CD8-positive, alpha-beta T cell (primary cell): ENCODE measurements at regions of chr9 and their contacts with region 1.

Region 1: GRCh38 chr9:122827761-122828093 is 661 bp downstream of the PDCL start:
- DNase-seq: no peak
- ATAC-seq: no peak
- H3K4me3 ChIP-seq: peak overlapping the region; percentile 93 to 99
- H3K4me3 Mint-ChIP-seq: peak overlapping the region; percentile 96
- H3K27ac ChIP-seq: peak overlapping the region; percentile 90 to 96
- H3K27ac Mint-ChIP-seq: peak overlapping the region; percentile 95
- H3K4me1 ChIP-seq: peaks cover 23% of the 10 kb centered on the region
- H3K4me1 Mint-ChIP-seq: peaks cover 48% of the 10 kb centered on the region
- H3K27me3 ChIP-seq: no peaks in the 10 kb centered on the region
- H3K27me3 Mint-ChIP-seq: no peaks in the 10 kb centered on the region
- CTCF ChIP-seq: no peak

Region 2: GRCh38 chr9:122159026-122159924 is 668.5 kb before region 1 on chr9 and contains the starts of genes MORN5 and NDUFA8:
- CTCF ChIA-PET with region 1: no interaction called
- POLR2A ChIA-PET with region 1: no interaction called
- intact Hi-C with region 1: loop called (anchors 1 kb)
- DNase-seq: peak; percentile 90 to 98 (median 96)
- ATAC-seq: peak; percentile 96
- H3K4me3 ChIP-seq: peak within 1 kb of the TSS; percentile 68 to 99
- H3K4me3 Mint-ChIP-seq: peak within 1 kb of the TSS; percentile 99
- H3K27ac ChIP-seq: peak within 1 kb of the TSS; percentile 74 to 86
- H3K27ac Mint-ChIP-seq: peak within 1 kb of the TSS; percentile 98
- H3K4me1 ChIP-seq: peaks cover 27% of the 10 kb centered on the region
- H3K4me1 Mint-ChIP-seq: peaks cover 42% of the 10 kb centered on the region
- H3K27me3 ChIP-seq: no peaks in the 10 kb centered on the region
- H3K27me3 Mint-ChIP-seq: peaks cover 14% of the 10 kb centered on the region
- CTCF ChIP-seq: no peak
- total RNA-seq, gene MORN5: not detected
- total RNA-seq, gene NDUFA8: 5.7 to 7.0 TPM

Region 3: DNA sequence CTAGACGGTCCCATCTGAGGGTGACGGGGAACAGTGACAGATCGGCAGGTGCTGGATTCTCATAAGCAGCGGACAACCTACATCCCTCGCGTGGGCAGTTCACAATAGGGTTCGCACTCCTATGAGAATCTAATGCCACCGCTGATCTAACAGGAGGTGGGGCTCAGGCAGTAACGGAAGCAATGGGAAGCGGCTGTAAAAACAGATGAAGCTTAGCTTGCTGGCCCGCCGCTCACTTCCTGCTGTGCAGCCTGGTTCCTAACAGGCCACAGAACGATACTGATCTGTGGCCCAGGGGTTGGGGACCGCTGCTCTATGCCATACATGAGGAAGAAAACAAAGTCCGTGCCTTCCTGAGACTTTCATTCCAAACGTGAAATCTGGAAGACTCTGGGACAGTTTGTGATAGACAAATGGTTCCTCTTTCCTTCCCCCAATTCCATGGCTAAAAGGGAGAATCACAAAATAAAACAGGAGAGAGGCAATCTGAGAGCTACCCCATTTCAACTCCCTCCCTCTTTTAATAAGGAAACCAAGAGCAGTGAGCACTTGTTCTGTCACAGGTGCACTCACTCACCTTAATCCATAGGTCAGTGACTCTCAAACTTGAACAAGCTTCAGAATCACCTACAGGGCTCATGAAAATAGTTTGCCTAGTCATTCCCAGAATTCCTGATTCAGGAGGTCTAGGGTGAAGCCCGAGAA is 11.4 kb before region 1 on chr9:
- CTCF ChIA-PET with region 1: interaction called, 5 read pairs
- POLR2A ChIA-PET with region 1: interaction called, 5 read pairs
- intact Hi-C with region 1: loop called in 1 of 2 experiments (anchors 1 kb)
- DNase-seq: peak in 8 of 9 experiments; percentile 35 to 74 (median 54)
- ATAC-seq: peak; percentile 87
- H3K4me3 ChIP-seq: peak overlapping the region; percentile 16 to 21
- H3K4me3 Mint-ChIP-seq: peak overlapping the region; percentile 78
- H3K27ac ChIP-seq: peak overlapping the region; percentile 26 to 65
- H3K27ac Mint-ChIP-seq: peak overlapping the region; percentile 96
- H3K4me1 ChIP-seq: peaks cover 22% of the 10 kb centered on the region
- H3K4me1 Mint-ChIP-seq: peaks cover 42% of the 10 kb centered on the region
- H3K27me3 ChIP-seq: no peaks in the 10 kb centered on the region
- H3K27me3 Mint-ChIP-seq: no peaks in the 10 kb centered on the region
- CTCF ChIP-seq: no peak

Region 4: GRCh38 chr9:122904823-122905710 is 77.3 kb after region 1 on chr9 and contains the start of gene RC3H2:
- CTCF ChIA-PET with region 1: no interaction called
- POLR2A ChIA-PET with region 1: interaction called, 7 read pairs
- intact Hi-C with region 1: loop called (anchors 1 to 2 kb)
- DNase-seq: peak; percentile 92 to 100 (median 97)
- ATAC-seq: peak; percentile 91
- H3K4me3 ChIP-seq: peak within 1 kb of the TSS; percentile 66 to 92
- H3K4me3 Mint-ChIP-seq: peak within 1 kb of the TSS; percentile 94
- H3K27ac ChIP-seq: peak within 1 kb of the TSS; percentile 67 to 94
- H3K27ac Mint-ChIP-seq: peak within 1 kb of the TSS; percentile 98
- H3K4me1 ChIP-seq: peaks cover 32% of the 10 kb centered on the region
- H3K4me1 Mint-ChIP-seq: peaks cover 26% of the 10 kb centered on the region
- H3K27me3 ChIP-seq: no peaks in the 10 kb centered on the region
- H3K27me3 Mint-ChIP-seq: no peaks in the 10 kb centered on the region
- CTCF ChIP-seq: no peak
- total RNA-seq, gene RC3H2: 77.6 to 79.5 TPM

Region 5: DNA sequence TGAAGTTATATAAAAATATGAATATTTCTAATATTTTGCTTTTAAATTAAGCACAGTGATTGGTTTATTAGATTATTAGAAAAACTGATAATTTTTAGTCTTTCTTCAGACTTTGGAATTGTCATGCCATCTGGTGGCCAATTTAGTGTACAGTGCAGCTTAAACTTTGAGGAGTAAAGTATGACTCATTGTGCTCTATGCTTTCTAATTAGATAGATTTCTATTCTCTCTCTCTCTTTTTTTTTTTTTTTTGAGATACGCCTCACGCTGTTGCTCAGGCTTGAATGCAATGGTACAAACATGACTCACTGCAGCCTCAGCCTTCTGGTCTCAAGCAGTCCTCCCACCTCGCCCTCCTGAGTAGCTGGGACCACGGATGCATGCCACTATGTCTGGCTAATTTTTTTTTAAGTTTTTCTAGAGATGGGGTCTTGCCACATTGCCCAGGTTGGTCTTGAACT is 163.7 kb after region 1 on chr9:
- CTCF ChIA-PET with region 1: no interaction called
- POLR2A ChIA-PET with region 1: no interaction called
- intact Hi-C with region 1: loop called in 1 of 2 experiments (anchors 5 kb)
- DNase-seq: peak in 5 of 9 experiments; percentile 12 to 65 (median 50)
- ATAC-seq: peak; percentile 86
- H3K4me3 ChIP-seq: no peak overlapping the region
- H3K4me3 Mint-ChIP-seq: no peak overlapping the region
- H3K27ac ChIP-seq: no peak overlapping the region
- H3K27ac Mint-ChIP-seq: no peak overlapping the region
- H3K4me1 ChIP-seq: no peaks in the 10 kb centered on the region
- H3K4me1 Mint-ChIP-seq: peaks cover 2% of the 10 kb centered on the region
- H3K27me3 ChIP-seq: no peaks in the 10 kb centered on the region
- H3K27me3 Mint-ChIP-seq: no peaks in the 10 kb centered on the region
- CTCF ChIP-seq: peak; percentile 71

Region 6: GRCh38 chr9:123929870-123930831 is 1102.4 kb after region 1 on chr9 and contains the start of gene DENND1A:
- CTCF ChIA-PET with region 1: no interaction called
- POLR2A ChIA-PET with region 1: no interaction called
- intact Hi-C with region 1: loop called in 1 of 2 experiments (anchors 5 kb)
- DNase-seq: peak; percentile 74 to 92 (median 85)
- ATAC-seq: peak; percentile 94
- H3K4me3 ChIP-seq: peak within 1 kb of the TSS; percentile 58 to 66
- H3K4me3 Mint-ChIP-seq: peak within 1 kb of the TSS; percentile 90
- H3K27ac ChIP-seq: no peak within 1 kb of the TSS
- H3K27ac Mint-ChIP-seq: peak within 1 kb of the TSS; percentile 75
- H3K4me1 ChIP-seq: peaks cover 22% of the 10 kb centered on the region
- H3K4me1 Mint-ChIP-seq: peaks cover 42% of the 10 kb centered on the region
- H3K27me3 ChIP-seq: no peaks in the 10 kb centered on the region
- H3K27me3 Mint-ChIP-seq: no peaks in the 10 kb centered on the region
- CTCF ChIP-seq: no peak
- total RNA-seq, gene DENND1A: 17.5 to 18.7 TPM